ENCODE measurements at regions of chr6 and their contacts with region 1.

Region 1: DNA sequence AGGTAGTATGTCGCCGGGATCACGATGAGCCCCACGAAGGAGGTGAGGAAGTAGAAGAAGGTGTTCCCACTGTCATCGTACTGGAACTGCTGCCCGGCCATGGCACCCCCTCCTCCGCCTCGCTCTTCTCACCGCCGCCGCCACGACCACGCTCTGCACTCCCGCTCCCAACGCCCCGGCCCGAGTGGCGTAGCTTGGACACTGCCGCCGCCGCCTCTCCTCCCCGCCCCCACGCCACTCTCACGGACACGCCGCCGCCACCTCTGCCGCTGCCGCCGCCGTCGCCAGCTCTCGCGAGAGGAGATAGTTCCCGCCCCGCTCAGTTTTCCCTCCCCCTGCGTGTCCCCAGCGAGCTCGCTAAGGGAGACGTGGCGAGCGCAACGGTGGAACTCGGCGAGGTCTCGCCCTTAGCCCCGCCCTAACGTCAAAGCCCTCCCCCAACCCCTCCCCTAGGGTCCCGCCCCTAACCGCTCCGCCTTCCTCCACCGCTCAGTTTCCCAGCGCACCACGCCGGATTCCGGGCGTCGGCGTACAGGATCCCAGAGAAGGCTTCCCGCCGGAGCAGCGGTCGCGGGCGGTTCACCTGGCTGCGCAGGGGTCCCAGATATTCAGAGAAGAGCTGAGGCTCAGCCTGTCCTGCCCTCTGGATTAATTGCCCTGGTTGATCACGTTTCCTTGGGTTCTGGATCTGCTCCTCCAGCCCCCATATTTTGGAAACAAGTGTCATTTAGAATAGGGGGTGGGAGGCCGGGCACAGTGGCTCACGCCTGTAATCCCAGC is at the start of gene SEC63:
- DNase-seq: peak; percentile 95 to 96 (median 96)
- H3K4me3 ChIP-seq: peak within 1 kb of the TSS; percentile 55 to 80
- H3K4me3 Mint-ChIP-seq: peak within 1 kb of the TSS; percentile 92 to 100 (median 98)
- H3K27ac ChIP-seq: peak within 1 kb of the TSS; percentile 86
- H3K27ac Mint-ChIP-seq: peak within 1 kb of the TSS; percentile 92 to 98 (median 97)
- H3K4me1 ChIP-seq: peaks cover 29% of the 10 kb centered on the region
- H3K4me1 Mint-ChIP-seq: peaks cover 18 to 39% (median 29%) of the 10 kb centered on the region in 4 donors
- H3K27me3 ChIP-seq: no peaks in the 10 kb centered on the region
- H3K27me3 Mint-ChIP-seq: no peaks in the 10 kb centered on the region
- total RNA-seq, gene SEC63: 91.7 to 95.5 TPM

Region 2: GRCh38 chr6:107716688-107717089 is 241.4 kb before region 1 on chr6:
- CTCF ChIA-PET with region 1: no interaction called
- POLR2A ChIA-PET with region 1: no interaction called
- intact Hi-C with region 1: loop called (anchors 5 kb)
- DNase-seq: peak; percentile 83 to 92 (median 87)
- H3K4me3 ChIP-seq: no peak overlapping the region
- H3K4me3 Mint-ChIP-seq: peak overlapping the region in 7 of 8 donors; percentile 40 to 78 (median 74)
- H3K27ac ChIP-seq: no peak overlapping the region
- H3K27ac Mint-ChIP-seq: peak overlapping the region; percentile 89 to 98 (median 94)
- H3K4me1 ChIP-seq: peaks cover 66% of the 10 kb centered on the region
- H3K4me1 Mint-ChIP-seq: peaks cover 57 to 90% (median 75%) of the 10 kb centered on the region in 4 donors
- H3K27me3 ChIP-seq: no peaks in the 10 kb centered on the region
- H3K27me3 Mint-ChIP-seq: no peaks in the 10 kb centered on the region

Region 3: GRCh38 chr6:107941627-107942026 is 16.5 kb before region 1 on chr6:
- CTCF ChIA-PET with region 1: no interaction called
- POLR2A ChIA-PET with region 1: interaction called, 7 read pairs
- intact Hi-C with region 1: loop called (anchors 2 kb)
- DNase-seq: no peak
- H3K4me3 ChIP-seq: no peak overlapping the region
- H3K4me3 Mint-ChIP-seq: no peak overlapping the region
- H3K27ac ChIP-seq: no peak overlapping the region
- H3K27ac Mint-ChIP-seq: peak overlapping the region in 1 of 7 donors; percentile 25
- H3K4me1 ChIP-seq: peaks cover 16% of the 10 kb centered on the region
- H3K4me1 Mint-ChIP-seq: peaks cover 34 to 59% (median 46%) of the 10 kb centered on the region in 4 donors
- H3K27me3 ChIP-seq: no peaks in the 10 kb centered on the region
- H3K27me3 Mint-ChIP-seq: no peaks in the 10 kb centered on the region

Region 4: DNA sequence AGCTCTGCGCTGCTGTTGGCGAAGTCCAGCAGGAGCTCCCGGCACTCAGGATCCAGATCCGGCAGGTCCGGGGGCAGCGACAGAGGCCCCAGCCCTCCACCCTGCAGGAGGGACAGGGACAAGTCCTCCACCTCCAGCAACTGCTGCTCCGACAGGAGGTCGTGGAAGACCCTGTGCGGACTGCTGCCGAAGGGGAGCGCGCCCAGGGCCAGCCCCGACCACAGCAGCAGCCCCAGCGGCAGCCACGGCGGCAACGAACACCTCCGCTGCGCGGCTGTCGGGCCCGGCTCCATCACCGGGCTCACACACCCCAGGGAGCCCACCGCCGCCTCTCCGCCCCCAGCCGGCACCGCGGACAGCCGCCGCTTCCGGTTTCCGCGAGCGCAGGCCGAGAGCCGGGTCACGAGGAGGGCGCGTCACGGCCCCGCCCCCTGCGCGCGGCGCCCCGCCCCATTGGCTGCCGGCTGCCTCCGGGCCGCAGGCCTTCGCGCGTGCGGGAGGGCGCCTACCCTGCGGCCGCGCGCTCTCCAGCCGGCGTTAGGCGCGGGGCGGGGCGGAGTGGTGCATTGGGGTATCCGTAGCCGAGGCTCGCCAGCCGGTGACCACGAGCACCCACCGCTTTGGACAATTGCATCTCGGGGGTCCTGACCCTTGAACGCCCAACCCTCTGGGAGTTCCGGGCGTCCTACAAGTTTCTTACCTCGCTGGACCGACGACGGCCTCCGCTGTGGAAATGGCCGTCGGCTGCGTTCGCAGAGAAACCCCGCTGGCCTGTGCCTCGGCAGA is 116.5 kb after region 1 on chr6 and contains the start of gene OSTM1:
- CTCF ChIA-PET with region 1: no interaction called
- POLR2A ChIA-PET with region 1: no interaction called
- intact Hi-C with region 1: loop called (anchors 1 kb)
- DNase-seq: peak; percentile 88 to 93 (median 93)
- H3K4me3 ChIP-seq: peak within 1 kb of the TSS; percentile 66 to 100
- H3K4me3 Mint-ChIP-seq: peak within 1 kb of the TSS; percentile 87 to 95 (median 90)
- H3K27ac ChIP-seq: peak within 1 kb of the TSS; percentile 78
- H3K27ac Mint-ChIP-seq: peak within 1 kb of the TSS; percentile 90 to 96 (median 94)
- H3K4me1 ChIP-seq: peaks cover 24% of the 10 kb centered on the region
- H3K4me1 Mint-ChIP-seq: peaks cover 18 to 32% (median 20%) of the 10 kb centered on the region in 4 donors
- H3K27me3 ChIP-seq: no peaks in the 10 kb centered on the region
- H3K27me3 Mint-ChIP-seq: peaks cover 0 to 5% of the 10 kb centered on the region in 2 donors
- total RNA-seq, gene OSTM1: 54.4 to 55.6 TPM

Region 5: DNA sequence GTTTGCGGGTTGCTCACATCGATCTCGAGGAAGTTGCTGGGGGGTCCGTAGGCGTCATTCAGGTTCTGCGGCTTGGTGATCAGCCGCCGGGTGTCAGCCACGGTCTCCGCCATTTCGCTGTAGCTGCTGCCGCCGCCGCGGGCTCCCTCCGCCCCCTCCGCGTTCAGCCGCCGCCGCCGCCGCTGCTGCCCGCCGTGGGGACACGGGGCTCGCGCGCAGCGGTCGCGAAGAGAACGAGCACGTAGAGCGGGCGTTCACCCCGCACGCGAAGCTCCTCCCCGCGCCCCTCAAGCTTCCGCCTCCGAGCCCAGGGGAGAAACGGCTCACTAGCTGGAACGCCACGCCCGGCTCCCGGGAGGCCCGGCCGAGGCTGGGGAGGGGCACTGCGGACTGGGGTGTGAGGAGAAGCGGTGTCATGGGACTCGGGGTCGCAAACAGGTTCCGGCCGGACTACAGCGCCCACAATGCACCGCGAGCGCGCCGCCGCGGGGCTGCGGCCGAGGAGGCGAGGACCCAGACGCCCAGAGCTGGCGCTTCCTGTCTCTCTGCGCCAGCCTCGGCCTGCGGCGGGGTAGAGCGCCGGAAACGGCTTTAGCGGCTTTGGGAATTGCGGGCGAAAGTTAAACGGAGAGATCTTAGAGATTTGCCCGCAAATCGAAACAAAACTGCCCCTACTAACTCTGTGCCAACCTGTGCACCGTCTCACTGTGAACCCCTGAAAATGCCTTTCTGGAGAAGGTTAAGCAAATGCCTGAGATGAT is 302.9 kb after region 1 on chr6 and contains the start of gene SNX3:
- CTCF ChIA-PET with region 1: no interaction called
- POLR2A ChIA-PET with region 1: interaction called, 3 read pairs
- intact Hi-C with region 1: loop called (anchors 1 kb)
- DNase-seq: peak; percentile 90 to 94 (median 91)
- H3K4me3 ChIP-seq: peak within 1 kb of the TSS; percentile 93 to 98
- H3K4me3 Mint-ChIP-seq: peak within 1 kb of the TSS; percentile 86 to 97 (median 92)
- H3K27ac ChIP-seq: peak within 1 kb of the TSS; percentile 84
- H3K27ac Mint-ChIP-seq: peak within 1 kb of the TSS; percentile 89 to 97 (median 95)
- H3K4me1 ChIP-seq: peaks cover 43% of the 10 kb centered on the region
- H3K4me1 Mint-ChIP-seq: peaks cover 15 to 38% (median 27%) of the 10 kb centered on the region in 4 donors
- H3K27me3 ChIP-seq: no peaks in the 10 kb centered on the region
- H3K27me3 Mint-ChIP-seq: peaks cover 0 to 2% of the 10 kb centered on the region in 2 donors
- total RNA-seq, gene SNX3: 65.9 to 66.6 TPM

Region 6: DNA sequence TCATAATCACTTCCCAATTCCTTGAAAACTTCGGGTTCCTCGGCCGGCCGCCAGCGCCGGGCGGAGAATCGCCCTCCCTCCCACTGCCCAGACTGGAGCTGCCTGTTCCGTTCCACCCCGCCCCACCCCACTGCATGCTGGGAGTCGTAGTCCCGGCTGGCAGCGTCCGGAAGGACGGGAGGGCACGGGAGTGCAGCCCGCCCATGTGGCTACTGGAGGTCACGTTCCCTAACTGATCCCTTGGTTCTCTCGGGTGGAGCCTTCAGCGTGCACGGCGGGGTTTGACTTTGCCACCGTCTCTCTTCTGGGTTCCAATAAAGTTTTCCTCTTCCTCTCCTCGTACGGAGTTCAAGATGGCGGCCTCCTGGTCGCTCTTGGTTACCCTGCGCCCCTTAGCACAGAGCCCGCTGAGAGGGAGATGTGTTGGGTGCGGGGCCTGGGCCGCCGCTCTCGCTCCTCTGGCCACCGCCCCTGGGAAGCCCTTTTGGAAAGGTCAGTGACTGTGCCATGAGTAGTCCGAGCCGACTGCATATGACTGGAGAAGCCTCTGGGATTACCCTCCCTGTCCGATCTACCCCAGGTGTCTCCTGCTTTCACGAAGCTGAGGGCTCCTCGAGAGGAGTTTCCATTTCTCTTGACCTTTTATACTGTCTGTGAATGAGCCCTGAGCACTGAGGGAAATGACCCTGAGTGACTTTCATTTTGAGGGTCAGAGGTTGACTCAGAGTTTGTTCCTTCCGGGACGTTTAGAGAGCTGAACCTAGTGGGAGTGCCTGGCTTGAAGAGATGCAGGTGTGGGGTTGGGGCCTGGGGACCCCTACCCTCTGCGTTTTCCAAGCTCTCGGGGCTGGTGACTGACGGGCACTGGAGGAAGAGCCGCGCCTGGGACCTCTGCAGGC is 336.9 kb after region 1 on chr6 and contains the start of gene AFG1L:
- CTCF ChIA-PET with region 1: no interaction called
- POLR2A ChIA-PET with region 1: no interaction called
- intact Hi-C with region 1: loop called (anchors 2 kb)
- DNase-seq: peak; percentile 85 to 92 (median 88)
- H3K4me3 ChIP-seq: peak within 1 kb of the TSS; percentile 68 to 98
- H3K4me3 Mint-ChIP-seq: peak within 1 kb of the TSS; percentile 96 to 99 (median 98)
- H3K27ac ChIP-seq: peak within 1 kb of the TSS; percentile 91
- H3K27ac Mint-ChIP-seq: peak within 1 kb of the TSS; percentile 91 to 100 (median 99)
- H3K4me1 ChIP-seq: peaks cover 17% of the 10 kb centered on the region
- H3K4me1 Mint-ChIP-seq: peaks cover 6 to 23% (median 15%) of the 10 kb centered on the region in 4 donors
- H3K27me3 ChIP-seq: no peaks in the 10 kb centered on the region
- H3K27me3 Mint-ChIP-seq: no peaks in the 10 kb centered on the region
- total RNA-seq, gene AFG1L: 6.3 to 6.6 TPM

Measured in CD4-positive, alpha-beta memory T cell (primary cell).